Endothelial cell of umbilical vein (primary cell): ENCODE measurements at regions of chr18 and their contacts with region 1.

Region 1: GRCh38 chr18:3245853-3246634 is 1.6 kb upstream of the MYL12A start:
- DNase-seq: peak; percentile 91
- H3K4me3 ChIP-seq: peak overlapping the region; percentile 26 to 75 (median 66)
- H3K27ac ChIP-seq: peak overlapping the region; percentile 83
- H3K4me1 ChIP-seq: peaks cover 26% of the 10 kb centered on the region
- H3K27me3 ChIP-seq: no peaks in the 10 kb centered on the region
- CTCF ChIP-seq: peak; percentile 96
- POLR2A ChIP-seq: no peak

Region 2: GRCh38 chr18:2547477-2548087 is 698.5 kb before region 1 on chr18:
- CTCF ChIA-PET with region 1: interaction called, 11 read pairs
- POLR2A ChIA-PET with region 1: no interaction called
- dilution Hi-C with region 1: no loop called
- intact Hi-C with region 1: no loop called
- DNase-seq: peak; percentile 60
- H3K4me3 ChIP-seq: no peak overlapping the region
- H3K27ac ChIP-seq: no peak overlapping the region
- H3K4me1 ChIP-seq: no peaks in the 10 kb centered on the region
- H3K27me3 ChIP-seq: no peaks in the 10 kb centered on the region
- CTCF ChIP-seq: peak; percentile 6 to 28
- POLR2A ChIP-seq: no peak

Region 3: GRCh38 chr18:2906704-2907549 is 339.1 kb before region 1 on chr18:
- CTCF ChIA-PET with region 1: interaction called, 6 read pairs
- POLR2A ChIA-PET with region 1: no interaction called
- dilution Hi-C with region 1: no loop called
- intact Hi-C with region 1: loop called (anchors 1 kb)
- DNase-seq: peak; percentile 24
- H3K4me3 ChIP-seq: peak overlapping the region; percentile 48 to 56 (median 55)
- H3K27ac ChIP-seq: peak overlapping the region; percentile 50
- H3K4me1 ChIP-seq: peaks cover 13% of the 10 kb centered on the region
- H3K27me3 ChIP-seq: no peaks in the 10 kb centered on the region
- CTCF ChIP-seq: peak; percentile 30 to 51
- POLR2A ChIP-seq: no peak

Region 4: DNA sequence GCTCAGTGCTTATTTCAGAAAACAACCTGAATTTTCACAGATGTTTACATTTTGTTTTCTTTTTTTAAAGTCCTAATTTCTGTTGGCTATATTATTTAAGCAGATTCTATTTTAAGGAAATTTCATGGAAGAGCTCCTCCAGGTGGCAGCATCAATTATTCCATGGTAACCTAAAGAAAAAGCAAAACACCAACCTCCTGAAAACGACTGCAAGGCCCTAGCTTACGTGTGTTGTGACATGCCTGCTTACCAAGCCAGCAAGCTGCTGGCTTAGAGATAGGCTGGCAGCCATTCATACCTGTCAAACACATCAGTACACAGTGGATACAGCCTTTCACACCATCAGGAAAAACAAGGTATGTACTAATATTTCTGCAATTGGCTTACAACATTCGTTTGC is 298.0 kb before region 1 on chr18:
- CTCF ChIA-PET with region 1: interaction called, 24 read pairs
- POLR2A ChIA-PET with region 1: interaction called, 7 read pairs
- dilution Hi-C with region 1: no loop called
- intact Hi-C with region 1: no loop called
- DNase-seq: peak; percentile 62
- H3K4me3 ChIP-seq: no peak overlapping the region
- H3K27ac ChIP-seq: peak overlapping the region; percentile 5
- H3K4me1 ChIP-seq: no peaks in the 10 kb centered on the region
- H3K27me3 ChIP-seq: no peaks in the 10 kb centered on the region
- CTCF ChIP-seq: peak in 1 of 2 donors; percentile 38
- POLR2A ChIP-seq: no peak

Region 5: DNA sequence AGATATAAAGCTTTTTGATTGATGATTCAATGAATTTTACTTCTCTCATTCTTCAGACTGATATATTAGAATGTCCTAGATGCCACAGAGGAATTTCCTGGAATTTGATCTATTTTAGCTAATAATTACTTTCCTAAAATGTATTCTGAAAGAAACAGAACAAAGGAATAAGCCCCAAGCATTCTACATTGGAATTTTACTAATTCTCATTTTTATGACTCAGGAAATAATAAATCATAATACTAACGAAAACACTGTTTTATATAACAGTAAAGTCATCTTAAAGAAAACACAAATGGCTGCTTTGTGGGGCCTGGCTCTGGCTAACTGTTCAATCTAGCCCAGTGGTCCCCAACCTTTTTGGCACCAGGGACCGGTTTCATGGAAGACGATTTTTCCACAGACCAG is 164.5 kb before region 1 on chr18:
- CTCF ChIA-PET with region 1: no interaction called
- POLR2A ChIA-PET with region 1: no interaction called
- dilution Hi-C with region 1: no loop called
- intact Hi-C with region 1: loop called (anchors 1 kb)
- DNase-seq: peak; percentile 75
- H3K4me3 ChIP-seq: no peak overlapping the region
- H3K27ac ChIP-seq: peak overlapping the region; percentile 53
- H3K4me1 ChIP-seq: peaks cover 37% of the 10 kb centered on the region
- H3K27me3 ChIP-seq: no peaks in the 10 kb centered on the region
- CTCF ChIP-seq: no peak
- POLR2A ChIP-seq: no peak

Region 6: GRCh38 chr18:3217948-3218647 is 27.9 kb before region 1 on chr18:
- CTCF ChIA-PET with region 1: no interaction called
- POLR2A ChIA-PET with region 1: no interaction called
- dilution Hi-C with region 1: no loop called
- intact Hi-C with region 1: no loop called
- DNase-seq: no peak
- H3K4me3 ChIP-seq: no peak overlapping the region
- H3K27ac ChIP-seq: no peak overlapping the region
- H3K4me1 ChIP-seq: no peaks in the 10 kb centered on the region
- H3K27me3 ChIP-seq: peaks cover 3 to 4% of the 10 kb centered on the region in 2 experiments
- CTCF ChIP-seq: no peak
- POLR2A ChIP-seq: no peak

Region 7: DNA sequence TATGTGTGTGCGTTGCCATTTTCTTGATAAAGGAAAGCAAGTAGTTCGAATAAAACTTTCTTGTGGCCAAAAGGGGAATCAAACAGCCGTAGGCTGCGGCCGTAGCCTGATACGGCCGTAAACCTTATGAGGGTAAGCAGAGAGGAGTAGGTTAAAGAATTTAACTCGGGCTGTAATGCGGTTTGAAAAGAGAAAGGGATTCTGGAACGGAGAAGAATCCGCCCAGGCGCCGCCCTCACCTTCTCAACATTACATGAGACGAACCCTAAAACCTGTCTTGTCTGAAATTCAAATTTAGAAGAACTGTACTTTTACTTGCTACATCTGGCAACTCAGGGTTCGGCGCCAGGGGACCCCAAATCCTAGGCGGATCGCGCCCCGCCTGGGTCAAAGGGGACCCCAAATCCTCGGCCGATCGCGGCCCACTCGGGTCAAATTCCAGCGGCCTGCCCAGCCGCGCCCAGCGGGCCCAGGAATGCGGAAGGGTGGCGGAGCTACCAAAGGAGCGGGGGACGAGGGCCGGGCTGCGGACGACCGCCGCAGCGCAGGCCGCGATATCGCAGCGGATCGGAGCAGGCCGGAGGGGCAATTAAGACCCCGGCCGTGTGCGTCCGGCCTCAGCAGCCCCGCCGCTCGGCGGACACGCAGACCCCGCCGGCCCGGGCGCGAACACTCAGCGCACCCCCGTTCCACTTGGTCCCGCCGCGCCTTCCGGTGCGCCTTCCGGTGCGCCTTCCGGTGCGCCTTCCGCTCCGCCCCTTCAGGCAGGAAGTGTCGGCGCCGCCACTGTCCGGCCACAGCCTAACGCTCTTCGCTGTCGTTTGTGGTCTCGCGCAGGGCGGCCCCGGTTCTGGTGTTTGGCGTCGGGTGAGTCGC is 15.6 kb after region 1 on chr18 and contains the start of gene MYL12B:
- CTCF ChIA-PET with region 1: interaction called, 10 read pairs
- POLR2A ChIA-PET with region 1: interaction called, 17 read pairs
- dilution Hi-C with region 1: no loop called
- intact Hi-C with region 1: loop called (anchors 1 kb)
- DNase-seq: peak; percentile 80
- H3K4me3 ChIP-seq: peak within 1 kb of the TSS; percentile 93 to 100 (median 97)
- H3K27ac ChIP-seq: peak within 1 kb of the TSS; percentile 94
- H3K4me1 ChIP-seq: peaks cover 36% of the 10 kb centered on the region
- H3K27me3 ChIP-seq: no peaks in the 10 kb centered on the region
- CTCF ChIP-seq: no peak
- POLR2A ChIP-seq: peak; percentile 75
- total RNA-seq, gene MYL12B: 634 and 638 TPM in 2 replicates